ENCODE measurements at regions of chr5 and their contacts with region 1.

Region 1: GRCh38 chr5:53170748-53171349 is 61.3 kb upstream of the MOCS2 start:
- DNase-seq: no peak
- H3K4me3 ChIP-seq: no peak overlapping the region
- CTCF ChIP-seq: no peak
- POLR2A ChIP-seq: no peak

Region 2: DNA sequence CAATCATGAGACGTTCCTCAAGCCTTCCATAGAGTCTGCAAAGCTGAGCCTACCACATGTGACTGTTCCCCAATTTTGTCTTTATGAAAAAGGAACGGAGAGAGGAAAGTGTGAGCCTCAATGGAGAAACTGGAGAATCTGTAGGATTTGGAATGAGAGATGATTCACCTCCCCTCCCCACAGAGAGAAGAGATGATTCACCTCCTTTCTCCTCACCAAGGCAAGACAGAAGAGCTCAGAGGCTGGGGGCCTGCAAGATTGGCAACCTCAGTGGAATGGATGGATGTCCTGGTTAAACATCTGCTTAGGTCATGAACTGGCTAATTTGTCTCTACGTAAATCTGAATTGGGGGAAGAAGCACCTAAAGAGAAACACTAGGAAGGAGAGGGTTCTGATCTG is 44.3 kb before region 1 on chr5:
- intact Hi-C with region 1: no loop called
- DNase-seq: no peak
- H3K4me3 ChIP-seq: no peak overlapping the region
- CTCF ChIP-seq: no peak
- POLR2A ChIP-seq: no peak

Region 3: DNA sequence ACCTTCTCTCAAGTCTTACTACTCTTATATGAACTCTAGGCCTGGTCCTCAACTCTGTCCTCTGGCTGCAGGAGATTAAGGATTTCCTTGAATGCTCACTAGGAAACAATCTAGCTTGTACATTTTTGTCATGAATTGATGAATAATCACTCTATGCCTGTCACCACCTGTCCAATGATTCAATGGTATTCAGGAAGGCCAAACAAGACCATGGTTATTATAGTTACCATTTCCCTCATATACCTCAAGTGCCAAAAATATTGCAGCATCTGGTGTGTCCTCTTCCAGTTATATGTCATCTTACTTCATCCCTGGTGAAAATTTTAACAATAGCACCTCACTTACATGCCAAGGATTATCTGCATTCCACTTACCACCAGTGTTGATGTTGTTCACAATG is 117.7 kb after region 1 on chr5:
- intact Hi-C with region 1: no loop called
- DNase-seq: no peak
- H3K4me3 ChIP-seq: no peak overlapping the region
- CTCF ChIP-seq: no peak
- POLR2A ChIP-seq: no peak

Region 4: DNA sequence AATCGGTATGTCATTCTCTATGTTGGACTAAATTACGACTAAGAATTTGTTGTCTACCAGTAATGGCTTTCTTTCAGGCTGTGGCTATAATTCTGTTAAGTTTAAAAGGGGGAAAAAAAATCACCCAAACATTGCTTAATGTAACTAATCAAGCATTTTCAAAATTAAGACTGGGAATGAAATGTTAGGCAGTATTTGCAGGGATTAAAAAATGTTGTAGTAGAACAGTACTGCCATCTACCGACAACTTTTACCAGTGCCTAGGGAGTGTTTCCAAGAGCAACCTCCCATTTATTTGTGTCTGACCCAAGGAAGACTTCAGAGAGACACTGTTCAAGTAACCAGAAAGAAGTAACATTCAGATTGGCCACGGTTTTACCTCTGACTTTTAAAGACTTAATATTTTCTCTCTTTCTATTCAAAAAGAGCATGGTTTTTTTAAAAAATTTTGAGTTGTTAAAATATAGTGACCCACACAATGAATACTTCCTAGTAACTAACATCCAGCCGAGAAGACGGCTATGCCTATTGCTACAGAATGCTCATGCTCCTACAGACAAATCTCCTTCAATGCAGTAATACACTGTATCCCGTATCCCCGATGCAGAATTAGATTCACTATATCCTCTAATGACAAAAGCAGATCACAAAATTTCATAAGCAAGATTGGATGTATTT is 1047.1 kb after region 1 on chr5:
- intact Hi-C with region 1: loop called (anchors 5 kb)
- DNase-seq: peak in 1 of 2 donors; percentile 52
- H3K4me3 ChIP-seq: no peak overlapping the region
- CTCF ChIP-seq: no peak
- POLR2A ChIP-seq: no peak

Region 5: GRCh38 chr5:54234304-54234933 is 1063.6 kb after region 1 on chr5:
- intact Hi-C with region 1: loop called (anchors 5 kb)
- DNase-seq: no peak
- H3K4me3 ChIP-seq: no peak overlapping the region
- CTCF ChIP-seq: no peak
- POLR2A ChIP-seq: no peak